Left ventricle myocardium superior (tissue), 1 donor: ENCODE measurements at regions of chr12 and their contacts with region 1.

Region 1: DNA sequence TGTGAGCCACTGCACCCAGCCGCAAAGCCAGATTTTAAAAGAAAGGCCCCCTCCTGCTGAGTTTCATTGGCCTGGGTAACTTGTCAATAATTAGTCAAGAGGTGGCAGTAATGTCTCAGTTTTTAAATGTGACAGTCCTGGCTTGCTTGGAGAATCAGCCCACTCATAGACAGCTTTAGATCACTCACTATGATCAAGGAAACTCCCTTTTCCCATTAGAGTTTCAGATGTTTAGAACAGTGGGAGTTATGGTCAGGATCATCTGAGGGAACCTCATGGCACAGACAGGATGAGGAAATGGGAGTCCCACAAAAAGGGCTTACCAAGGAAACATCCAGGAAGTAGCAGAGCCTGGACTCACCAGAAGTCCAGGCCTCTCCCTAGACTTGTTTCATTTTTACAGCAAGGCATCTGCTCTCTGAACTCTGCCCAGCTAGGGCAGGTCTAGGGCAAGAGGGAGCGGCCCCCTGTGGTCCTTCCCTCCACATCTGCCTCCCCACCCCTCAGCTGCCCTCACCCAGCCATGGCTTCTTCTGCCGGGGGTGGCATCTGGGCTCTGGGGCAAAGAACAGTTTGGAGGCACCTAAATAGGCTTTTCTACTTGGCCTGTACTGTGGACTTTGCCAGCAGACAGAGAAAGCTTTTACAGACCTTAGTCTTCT is 11.2 kb downstream of the BCL2L14 start:
- DNase-seq: no peak
- ATAC-seq: peak; percentile 90

Region 2: DNA sequence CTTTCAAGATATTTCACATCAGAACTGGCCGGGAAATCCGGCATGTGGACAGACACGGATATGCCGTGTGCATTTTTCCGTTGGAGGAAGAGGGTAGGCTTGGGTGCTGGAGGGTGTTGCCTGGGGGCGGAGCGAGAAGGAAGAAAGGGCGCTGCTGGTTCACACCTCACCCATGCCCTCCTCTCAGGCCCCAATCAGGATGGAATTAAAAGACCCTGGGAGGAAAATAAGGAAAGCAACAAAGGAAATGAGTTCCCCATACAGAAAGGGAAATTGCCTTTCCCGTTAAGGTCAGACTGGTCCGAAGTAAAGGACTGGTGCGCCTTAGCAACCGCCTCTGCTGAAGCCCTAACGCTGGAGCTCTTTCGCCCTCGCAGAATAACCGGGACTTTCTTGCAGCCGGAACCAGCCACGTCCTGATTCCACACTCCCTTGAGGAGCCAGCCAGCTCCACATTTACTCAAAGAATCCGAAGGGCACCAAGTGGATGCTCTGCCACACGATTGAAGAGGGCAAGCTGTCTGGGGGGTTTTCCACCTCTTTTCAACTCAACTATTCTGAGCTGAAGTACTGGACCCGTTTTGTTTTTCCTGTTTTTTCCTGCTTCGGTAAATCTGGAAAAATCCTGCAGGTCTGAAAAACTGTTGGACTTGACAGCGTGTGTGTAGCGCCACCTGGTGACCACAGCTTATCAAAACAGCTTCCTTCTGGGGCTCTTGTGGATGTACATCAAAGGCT is 48.9 kb before region 1 on chr12:
- intact Hi-C with region 1: no loop called
- DNase-seq: peak; percentile 75
- ATAC-seq: peak; percentile 89

Region 3: GRCh38 chr12:12327802-12328201 is 245.8 kb after region 1 on chr12:
- intact Hi-C with region 1: loop called (anchors 2 kb)
- DNase-seq: no peak
- ATAC-seq: peak; percentile 50